ENCODE measurements at regions of chr19 and their contacts with region 1.

Region 1: GRCh38 chr19:2869618-2870017 is 2.5 kb downstream of the ZNF556 start:
- DNase-seq: no peak
- H3K4me3 Mint-ChIP-seq: no peak overlapping the region
- H3K27ac Mint-ChIP-seq: no peak overlapping the region
- H3K4me1 Mint-ChIP-seq: no peaks in the 10 kb centered on the region
- H3K27me3 Mint-ChIP-seq: no peaks in the 10 kb centered on the region

Region 2: GRCh38 chr19:2648528-2648937 is 221.1 kb before region 1 on chr19:
- intact Hi-C with region 1: loop called (anchors 1 kb)
- DNase-seq: peak; percentile 59
- H3K4me3 Mint-ChIP-seq: no peak overlapping the region
- H3K27ac Mint-ChIP-seq: no peak overlapping the region
- H3K4me1 Mint-ChIP-seq: no peaks in the 10 kb centered on the region
- H3K27me3 Mint-ChIP-seq: no peaks in the 10 kb centered on the region

Region 3: GRCh38 chr19:2912306-2912705 is 42.7 kb after region 1 on chr19:
- intact Hi-C with region 1: no loop called
- DNase-seq: no peak
- H3K4me3 Mint-ChIP-seq: no peak overlapping the region
- H3K27ac Mint-ChIP-seq: no peak overlapping the region
- H3K4me1 Mint-ChIP-seq: peaks cover 5% of the 10 kb centered on the region
- H3K27me3 Mint-ChIP-seq: no peaks in the 10 kb centered on the region

Region 4: GRCh38 chr19:3075895-3076431 is 206.3 kb after region 1 on chr19:
- intact Hi-C with region 1: no loop called
- DNase-seq: peak; percentile 54
- H3K4me3 Mint-ChIP-seq: no peak overlapping the region
- H3K27ac Mint-ChIP-seq: no peak overlapping the region
- H3K4me1 Mint-ChIP-seq: no peaks in the 10 kb centered on the region
- H3K27me3 Mint-ChIP-seq: peaks cover 7% of the 10 kb centered on the region